ENCODE measurements at regions of chr19 and their contacts with region 1.

Region 1: DNA sequence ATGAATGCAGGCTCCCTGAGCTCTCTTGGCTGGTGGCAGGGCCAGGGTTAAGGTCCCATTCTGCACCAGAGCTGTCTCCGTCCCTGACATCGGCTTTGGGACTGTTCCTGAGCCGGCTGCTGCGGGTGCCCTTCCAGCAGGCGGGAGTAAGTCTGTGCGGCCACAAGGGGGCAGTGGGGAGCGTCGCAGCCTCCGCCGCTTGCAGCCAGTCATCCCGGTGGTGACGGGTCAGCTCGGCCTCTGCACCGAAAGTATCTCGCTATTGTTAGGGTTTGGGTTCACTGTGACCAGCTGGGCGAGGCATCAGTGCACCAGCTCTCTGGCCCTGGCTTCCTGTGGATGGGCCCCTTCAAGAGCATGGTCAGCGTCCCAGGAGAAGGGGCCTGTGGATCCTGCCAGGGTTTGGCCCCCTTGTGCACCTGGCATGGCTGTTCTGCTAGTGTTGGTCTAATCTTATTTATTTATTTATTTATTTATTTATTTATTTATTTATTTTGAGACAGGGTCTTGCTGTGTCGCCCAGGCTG is 15.1 kb downstream of the NDUFB7 start:
- DNase-seq: peak; percentile 77
- ATAC-seq: peak; percentile 79
- H3K4me3 Mint-ChIP-seq: no peak overlapping the region
- H3K27ac Mint-ChIP-seq: peak overlapping the region; percentile 69
- H3K4me1 Mint-ChIP-seq: peaks cover 39% of the 10 kb centered on the region
- H3K27me3 Mint-ChIP-seq: no peaks in the 10 kb centered on the region

Region 2: DNA sequence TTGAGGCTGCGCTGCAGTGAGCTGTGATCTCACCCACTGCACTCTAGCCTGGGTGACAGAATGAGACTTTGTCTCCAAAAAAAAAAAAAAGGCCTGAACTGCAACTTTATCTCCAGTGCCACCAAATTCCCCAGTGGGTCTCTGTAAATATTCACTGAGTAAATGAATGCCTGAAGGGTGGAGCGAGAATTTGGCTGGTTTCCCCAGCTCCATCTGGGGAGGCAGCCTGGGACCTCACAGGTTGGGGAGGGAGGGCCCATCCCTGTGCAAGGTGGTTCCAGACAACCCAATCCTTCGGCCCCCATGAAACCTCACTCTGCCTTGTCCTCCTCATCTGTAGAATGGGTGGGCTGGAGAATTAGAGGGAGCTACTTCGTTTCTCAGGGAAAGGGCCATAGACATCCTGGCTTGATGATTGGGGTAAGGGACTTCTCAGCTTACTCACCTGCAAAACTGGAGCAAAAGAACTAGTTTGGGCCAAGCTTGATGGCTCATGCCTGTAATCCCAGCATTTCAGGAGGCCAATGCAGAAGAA is 127.8 kb before region 1 on chr19:
- CTCF ChIA-PET with region 1: no interaction called
- POLR2A ChIA-PET with region 1: no interaction called
- DNase-seq: no peak
- ATAC-seq: no peak
- H3K4me3 Mint-ChIP-seq: no peak overlapping the region
- H3K27ac Mint-ChIP-seq: no peak overlapping the region
- H3K4me1 Mint-ChIP-seq: peaks cover 20% of the 10 kb centered on the region
- H3K27me3 Mint-ChIP-seq: peaks cover 8% of the 10 kb centered on the region

Region 3: DNA sequence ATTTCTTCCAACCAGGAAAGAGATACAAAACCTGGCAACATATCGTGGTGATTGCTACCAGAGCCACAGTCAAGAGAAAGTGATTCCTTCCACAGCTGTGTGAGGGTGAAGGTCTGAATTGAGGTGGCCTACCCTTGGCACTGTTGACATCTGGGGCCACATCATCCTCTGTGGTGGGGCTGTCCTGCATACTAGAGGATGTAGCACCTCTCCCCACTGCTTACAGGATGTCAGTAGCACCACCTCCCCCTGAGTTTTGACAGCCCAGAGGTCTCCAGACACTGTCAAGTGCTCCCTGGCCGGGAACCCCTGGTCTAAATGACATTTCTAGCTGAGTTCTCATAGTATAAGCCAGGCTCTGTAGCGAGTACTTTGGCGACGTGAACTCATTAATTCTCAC is 97.0 kb before region 1 on chr19:
- CTCF ChIA-PET with region 1: no interaction called
- POLR2A ChIA-PET with region 1: no interaction called
- DNase-seq: peak; percentile 70
- ATAC-seq: peak; percentile 95
- H3K4me3 Mint-ChIP-seq: no peak overlapping the region
- H3K27ac Mint-ChIP-seq: peak overlapping the region; percentile 70
- H3K4me1 Mint-ChIP-seq: peaks cover 17% of the 10 kb centered on the region
- H3K27me3 Mint-ChIP-seq: no peaks in the 10 kb centered on the region

Region 4: GRCh38 chr19:14472202-14472938 is 84.4 kb before region 1 on chr19:
- CTCF ChIA-PET with region 1: no interaction called
- POLR2A ChIA-PET with region 1: no interaction called
- DNase-seq: peak; percentile 88
- ATAC-seq: peak; percentile 73
- H3K4me3 Mint-ChIP-seq: no peak overlapping the region
- H3K27ac Mint-ChIP-seq: no peak overlapping the region
- H3K4me1 Mint-ChIP-seq: peaks cover 43% of the 10 kb centered on the region
- H3K27me3 Mint-ChIP-seq: peaks cover 16% of the 10 kb centered on the region

Region 5: DNA sequence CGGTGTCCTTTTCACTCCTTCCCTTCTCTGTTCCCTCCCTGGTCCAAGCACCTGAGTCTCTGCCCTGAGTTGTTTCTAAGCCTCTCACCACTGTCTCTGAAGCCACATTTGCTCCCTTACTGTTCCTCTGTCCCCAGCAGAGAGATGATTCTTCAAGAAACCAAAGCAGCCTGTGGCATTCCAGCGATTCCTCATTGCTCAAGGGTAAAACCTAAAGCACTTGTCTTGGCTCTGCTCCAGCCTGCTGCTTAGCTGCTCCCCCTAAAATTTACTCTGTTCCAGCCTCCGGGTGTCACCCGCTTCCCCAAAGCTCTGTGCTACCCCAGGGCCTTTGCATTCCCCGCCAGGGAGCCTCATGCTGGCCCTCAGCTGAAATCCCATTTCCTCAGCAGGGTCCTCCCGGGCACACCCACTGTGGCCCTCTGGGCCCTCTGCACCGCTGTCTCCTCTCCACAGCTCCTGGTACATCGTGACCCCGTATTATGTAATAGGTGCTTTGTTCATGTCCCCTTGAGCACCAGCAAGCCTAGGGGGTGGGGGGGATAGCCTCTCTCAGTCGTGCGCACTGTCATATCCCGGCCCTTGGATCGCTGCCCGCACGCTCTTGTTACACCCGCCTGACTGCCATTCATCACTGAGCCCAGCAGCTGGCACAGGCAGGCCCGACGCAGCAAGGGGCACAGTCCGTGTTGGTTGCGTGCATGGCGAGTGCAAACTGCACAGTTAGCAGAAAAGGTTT is 11.6 kb before region 1 on chr19:
- CTCF ChIA-PET with region 1: interaction called, 15 read pairs
- POLR2A ChIA-PET with region 1: interaction called, 3 read pairs
- DNase-seq: no peak
- ATAC-seq: no peak
- H3K4me3 Mint-ChIP-seq: no peak overlapping the region
- H3K27ac Mint-ChIP-seq: peak overlapping the region; percentile 28
- H3K4me1 Mint-ChIP-seq: peaks cover 4% of the 10 kb centered on the region
- H3K27me3 Mint-ChIP-seq: no peaks in the 10 kb centered on the region

Region 6: GRCh38 chr19:14571695-14572490 is 15.2 kb after region 1 on chr19 and contains the start of gene NDUFB7:
- CTCF ChIA-PET with region 1: interaction called, 22 read pairs
- POLR2A ChIA-PET with region 1: interaction called, 3 read pairs
- DNase-seq: peak; percentile 93
- ATAC-seq: peak; percentile 97
- H3K4me3 Mint-ChIP-seq: peak within 1 kb of the TSS; percentile 97
- H3K27ac Mint-ChIP-seq: peak within 1 kb of the TSS; percentile 92
- H3K4me1 Mint-ChIP-seq: peaks cover 42% of the 10 kb centered on the region
- H3K27me3 Mint-ChIP-seq: no peaks in the 10 kb centered on the region
- total RNA-seq, gene NDUFB7: 133 to 142 TPM

Region 7: DNA sequence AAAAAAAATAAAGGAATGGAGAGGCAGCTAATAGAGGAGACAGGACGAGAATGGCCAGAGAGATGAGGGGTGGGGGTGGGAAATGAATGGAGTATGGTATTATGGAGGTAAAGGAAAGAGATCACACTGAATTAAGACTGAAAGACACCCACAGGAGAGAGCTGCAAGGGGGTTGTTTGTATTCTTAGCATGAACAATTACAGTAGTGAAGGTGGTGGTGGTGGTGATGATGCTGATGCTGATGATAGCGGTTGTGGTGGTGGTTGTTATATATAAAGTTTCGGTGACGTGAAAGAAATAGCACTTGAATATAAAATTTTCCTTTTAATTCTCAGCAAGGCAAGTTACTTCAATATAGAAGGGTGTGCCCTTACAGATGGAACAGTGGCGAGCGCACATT is 120.7 kb after region 1 on chr19:
- CTCF ChIA-PET with region 1: no interaction called
- POLR2A ChIA-PET with region 1: no interaction called
- DNase-seq: no peak
- ATAC-seq: no peak
- H3K4me3 Mint-ChIP-seq: no peak overlapping the region
- H3K27ac Mint-ChIP-seq: no peak overlapping the region
- H3K4me1 Mint-ChIP-seq: no peaks in the 10 kb centered on the region
- H3K27me3 Mint-ChIP-seq: peaks cover 14% of the 10 kb centered on the region